GM10248 (cell line): ENCODE measurements at regions of chr2 and their contacts with region 1.

Region 1: GRCh38 chr2:74833418-74834233 is at the start of gene HK2:
- DNase-seq: peak; percentile 99
- CTCF ChIP-seq: no peak

Region 2: GRCh38 chr2:74778381-74779264 is 55.0 kb before region 1 on chr2:
- CTCF ChIA-PET with region 1: no interaction called
- POLR2A ChIA-PET with region 1: no interaction called
- DNase-seq: no peak
- CTCF ChIP-seq: no peak

Region 3: DNA sequence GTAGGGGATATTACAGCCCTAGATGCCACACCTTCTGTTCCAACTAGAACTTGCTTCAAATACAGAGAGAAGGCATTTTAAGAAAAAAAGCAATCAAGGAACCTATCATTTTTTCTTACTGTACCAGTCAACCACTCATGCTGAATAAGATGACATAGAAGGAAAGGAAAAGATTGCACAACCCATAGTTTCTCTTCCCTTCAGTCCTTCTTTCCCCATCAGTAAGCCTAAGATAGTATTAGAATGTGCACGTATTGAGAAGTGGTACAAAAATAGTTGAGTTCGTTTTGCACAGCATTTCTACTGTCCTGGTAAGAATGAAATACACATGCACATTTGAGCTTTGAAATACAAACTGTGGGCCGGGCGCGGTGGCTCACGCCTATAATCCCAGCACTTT is 26.7 kb before region 1 on chr2:
- CTCF ChIA-PET with region 1: no interaction called
- POLR2A ChIA-PET with region 1: no interaction called
- DNase-seq: no peak
- CTCF ChIP-seq: no peak

Region 4: GRCh38 chr2:74845217-74846011 is 11.8 kb after region 1 on chr2:
- CTCF ChIA-PET with region 1: interaction called, 28 read pairs
- POLR2A ChIA-PET with region 1: interaction called, 3 read pairs
- DNase-seq: no peak
- CTCF ChIP-seq: no peak

Region 5: DNA sequence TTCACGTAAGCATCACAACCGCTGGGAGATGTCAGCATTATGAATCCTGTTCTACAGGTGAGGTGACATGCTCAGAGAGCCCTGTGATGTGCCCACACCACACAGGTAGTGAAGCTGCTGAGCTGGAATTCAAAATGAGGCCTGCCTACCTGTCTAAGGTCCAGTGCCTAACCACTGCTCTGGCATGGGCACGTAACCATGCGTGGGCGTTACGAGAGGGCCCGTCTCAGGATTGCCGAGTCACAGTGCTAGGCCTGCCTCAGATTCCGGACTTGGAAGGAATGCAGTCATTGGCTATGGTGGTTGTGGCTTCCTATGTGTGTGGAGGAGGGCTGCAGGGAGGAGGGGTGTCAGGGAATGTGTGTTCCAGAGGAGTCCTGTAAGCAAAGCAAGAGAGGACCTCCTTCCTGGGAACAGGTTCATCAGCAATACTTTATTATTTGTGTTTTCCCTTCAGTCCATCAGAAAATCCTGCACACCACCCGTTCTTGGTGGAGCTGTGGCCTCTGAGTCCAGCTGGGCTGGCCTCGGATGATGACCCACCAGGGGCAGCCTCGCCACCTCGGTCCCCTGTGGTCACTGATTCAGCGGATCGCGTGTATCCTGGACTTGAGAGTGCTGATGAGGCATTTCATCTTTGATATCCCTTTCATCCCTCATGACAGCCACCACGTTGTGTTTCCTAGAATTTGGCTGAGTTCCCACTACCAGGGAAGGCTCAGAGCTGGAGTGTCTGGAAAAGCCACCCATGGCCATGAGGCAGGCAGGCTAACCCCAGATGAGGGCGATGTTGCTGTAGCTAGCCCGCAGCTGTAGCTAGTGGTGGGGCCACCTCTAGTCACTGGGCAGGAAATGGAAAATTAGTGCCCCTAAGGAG is 31.5 kb after region 1 on chr2:
- CTCF ChIA-PET with region 1: interaction called, 11 read pairs
- POLR2A ChIA-PET with region 1: no interaction called
- DNase-seq: no peak
- CTCF ChIP-seq: no peak